PC-3 (cell line): ENCODE measurements at regions of chr4 and their contacts with region 1.

Region 1: DNA sequence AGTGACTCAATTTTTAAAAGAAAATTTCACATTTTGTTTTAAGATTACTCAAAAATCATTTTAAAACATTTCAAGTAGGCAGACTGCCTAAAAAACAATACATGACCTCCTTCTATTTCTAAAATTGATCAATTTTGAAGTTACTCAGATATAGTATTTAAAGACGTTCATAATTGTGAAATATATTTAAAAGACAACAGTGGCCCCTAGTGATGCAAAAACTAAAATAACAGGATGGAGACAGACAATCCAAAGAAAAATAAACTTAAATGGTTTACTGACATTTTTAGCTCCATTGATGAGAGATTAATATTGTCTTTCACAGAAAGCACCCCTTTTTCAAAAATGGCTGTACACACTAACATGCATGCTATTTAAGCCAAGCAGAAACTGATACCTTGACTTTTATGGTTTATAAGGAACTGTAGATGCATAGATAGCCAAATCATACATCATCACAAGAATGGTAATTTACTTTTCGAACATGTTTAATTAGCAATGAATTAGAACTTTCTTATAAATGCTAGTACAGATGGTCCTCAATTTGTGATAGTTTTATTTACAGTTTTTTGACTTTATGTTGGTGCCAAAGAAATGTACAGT is 69.8 kb upstream of the FAT4 start:
- DNase-seq: peak; percentile 46
- ATAC-seq: peak; percentile 40
- H3K4me3 ChIP-seq: no peak overlapping the region; the same call in 1 of the 2 replicates
- H3K27ac ChIP-seq: no peak overlapping the region
- H3K4me1 ChIP-seq: peaks cover 14% of the 10 kb centered on the region
- H3K27me3 ChIP-seq: no peaks in the 10 kb centered on the region
- CTCF ChIP-seq: peak; percentile 67

Region 2: GRCh38 chr4:124940387-124940786 is 304.6 kb before region 1 on chr4:
- CTCF ChIA-PET with region 1: interaction called, 3 read pairs
- POLR2A ChIA-PET with region 1: no interaction called
- intact Hi-C with region 1: loop called (anchors 2 kb)
- DNase-seq: peak; percentile 88
- ATAC-seq: peak; percentile 37
- H3K4me3 ChIP-seq: no peak overlapping the region
- H3K27ac ChIP-seq: peak overlapping the region; percentile 98
- H3K4me1 ChIP-seq: peaks cover 66% of the 10 kb centered on the region
- H3K27me3 ChIP-seq: no peaks in the 10 kb centered on the region
- CTCF ChIP-seq: no peak

Region 3: GRCh38 chr4:125070484-125071260 is 174.3 kb before region 1 on chr4:
- CTCF ChIA-PET with region 1: no interaction called
- POLR2A ChIA-PET with region 1: no interaction called
- intact Hi-C with region 1: loop called (anchors 10 kb)
- DNase-seq: no peak
- ATAC-seq: no peak
- H3K4me3 ChIP-seq: no peak overlapping the region
- H3K27ac ChIP-seq: no peak overlapping the region
- H3K4me1 ChIP-seq: no peaks in the 10 kb centered on the region
- H3K27me3 ChIP-seq: no peaks in the 10 kb centered on the region
- CTCF ChIP-seq: no peak